Left colon (tissue), 2 donors: ENCODE measurements at regions of chr1 and their contacts with region 1.

Region 1: GRCh38 chr1:172398970-172399755 is 21.3 kb upstream of the C1orf105 start:
- DNase-seq: peak in 1 of 2 donors; percentile 49
- ATAC-seq: peak; percentile 72

Region 2: GRCh38 chr1:171877701-171878100 is 521.5 kb before region 1 on chr1:
- intact Hi-C with region 1: no loop called
- DNase-seq: no peak
- ATAC-seq: peak; percentile 44

Region 3: GRCh38 chr1:172024516-172024915 is 374.6 kb before region 1 on chr1:
- intact Hi-C with region 1: loop called in 1 of 2 experiments (anchors 10 kb)
- DNase-seq: no peak
- ATAC-seq: no peak

Region 4: DNA sequence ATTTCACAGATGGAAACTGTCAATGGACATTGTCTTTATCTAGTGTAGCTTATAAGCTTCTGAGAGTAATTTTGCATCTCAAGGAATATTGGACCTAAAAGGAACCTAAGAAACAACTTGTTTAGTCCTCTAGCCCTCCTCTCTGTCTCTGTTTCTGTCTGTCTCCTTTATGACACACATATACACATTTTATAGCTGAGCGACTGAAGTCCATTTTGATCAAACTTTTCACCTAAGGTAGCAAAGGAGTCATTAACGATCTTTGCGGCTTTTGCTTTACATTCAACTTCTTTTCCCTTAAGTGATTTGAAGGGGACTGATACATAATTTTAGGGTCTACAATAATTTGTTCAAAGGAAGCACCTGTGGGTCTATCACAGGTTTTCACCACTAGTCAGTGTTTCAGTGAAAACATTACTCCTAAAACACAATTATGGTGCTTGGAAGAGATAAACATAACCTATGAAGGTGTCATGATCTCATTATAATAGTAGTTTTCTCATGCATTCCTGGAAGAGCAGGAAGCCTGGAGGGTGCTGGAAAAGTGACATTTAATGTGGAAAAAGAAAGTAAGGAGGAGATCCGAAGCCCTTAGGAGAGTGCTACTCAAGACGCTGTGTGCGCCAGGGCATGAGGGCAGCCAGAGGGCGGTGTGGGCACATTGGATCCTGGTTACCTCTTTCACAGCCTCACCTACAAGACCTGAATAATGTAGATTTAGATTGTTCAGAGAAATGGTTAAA is 309.2 kb before region 1 on chr1:
- intact Hi-C with region 1: loop called in 1 of 2 experiments (anchors 10 kb)
- DNase-seq: peak; percentile 60 to 85
- ATAC-seq: peak; percentile 100

Region 5: GRCh38 chr1:172135076-172135672 is 264.0 kb before region 1 on chr1:
- intact Hi-C with region 1: loop called in 1 of 2 experiments (anchors 5 kb)
- DNase-seq: peak in 1 of 2 donors; percentile 18
- ATAC-seq: no peak

Region 6: GRCh38 chr1:172357753-172358385 is 41.3 kb before region 1 on chr1:
- intact Hi-C with region 1: loop called in 1 of 2 experiments (anchors 5 kb)
- DNase-seq: no peak
- ATAC-seq: no peak